Right ventricle myocardium inferior (tissue), 1 donor: ENCODE measurements at regions of chr2 and their contacts with region 1.

Region 1: DNA sequence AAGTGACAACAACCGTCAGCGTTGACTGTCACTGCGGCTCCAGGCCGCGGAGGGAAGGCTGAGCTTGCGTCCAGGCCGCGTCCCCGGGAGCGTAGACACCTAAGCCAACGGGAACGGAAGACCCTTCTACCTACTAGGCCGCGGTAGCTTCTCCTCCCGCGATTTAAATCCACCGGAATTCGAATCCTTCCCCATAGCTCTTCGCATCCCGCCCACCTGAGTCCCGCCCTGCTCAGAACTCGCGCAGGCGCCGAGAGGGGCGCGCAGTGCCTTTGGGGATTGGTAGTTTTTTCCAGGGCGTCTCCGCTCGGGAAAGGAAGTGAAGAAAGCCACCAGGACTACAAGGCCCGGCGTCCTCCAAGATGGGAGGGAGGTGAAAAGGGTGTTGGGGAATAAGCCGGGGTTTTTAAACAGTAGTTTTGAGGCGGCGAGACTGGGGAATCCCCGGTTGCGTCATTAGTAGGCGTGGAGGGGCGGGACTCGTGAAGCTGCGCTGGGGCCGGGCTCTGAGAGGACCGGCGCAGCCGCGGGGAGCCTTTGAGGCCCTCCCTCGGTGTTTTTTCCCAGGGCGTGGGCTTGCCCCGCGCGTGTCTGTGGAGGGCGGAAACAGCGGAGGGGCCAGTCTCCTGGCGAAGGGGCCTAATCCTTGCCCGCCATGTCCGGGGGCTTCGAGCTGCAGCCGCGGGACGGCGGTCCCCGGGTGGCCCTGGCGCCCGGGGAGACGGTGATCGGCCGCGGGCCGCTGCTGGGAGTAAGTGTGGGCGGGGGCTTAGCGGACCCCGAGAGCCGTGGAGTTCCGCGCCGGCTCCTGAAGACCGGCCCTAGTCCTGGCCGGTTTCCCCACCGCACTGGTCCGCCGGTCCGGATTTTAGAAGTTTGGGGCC is at the starts of genes APLF and FBXO48:
- DNase-seq: peak; percentile 98
- ATAC-seq: peak; percentile 99
- total RNA-seq, gene APLF: 3.8 TPM
- total RNA-seq, gene FBXO48: 1.1 TPM

Region 2: DNA sequence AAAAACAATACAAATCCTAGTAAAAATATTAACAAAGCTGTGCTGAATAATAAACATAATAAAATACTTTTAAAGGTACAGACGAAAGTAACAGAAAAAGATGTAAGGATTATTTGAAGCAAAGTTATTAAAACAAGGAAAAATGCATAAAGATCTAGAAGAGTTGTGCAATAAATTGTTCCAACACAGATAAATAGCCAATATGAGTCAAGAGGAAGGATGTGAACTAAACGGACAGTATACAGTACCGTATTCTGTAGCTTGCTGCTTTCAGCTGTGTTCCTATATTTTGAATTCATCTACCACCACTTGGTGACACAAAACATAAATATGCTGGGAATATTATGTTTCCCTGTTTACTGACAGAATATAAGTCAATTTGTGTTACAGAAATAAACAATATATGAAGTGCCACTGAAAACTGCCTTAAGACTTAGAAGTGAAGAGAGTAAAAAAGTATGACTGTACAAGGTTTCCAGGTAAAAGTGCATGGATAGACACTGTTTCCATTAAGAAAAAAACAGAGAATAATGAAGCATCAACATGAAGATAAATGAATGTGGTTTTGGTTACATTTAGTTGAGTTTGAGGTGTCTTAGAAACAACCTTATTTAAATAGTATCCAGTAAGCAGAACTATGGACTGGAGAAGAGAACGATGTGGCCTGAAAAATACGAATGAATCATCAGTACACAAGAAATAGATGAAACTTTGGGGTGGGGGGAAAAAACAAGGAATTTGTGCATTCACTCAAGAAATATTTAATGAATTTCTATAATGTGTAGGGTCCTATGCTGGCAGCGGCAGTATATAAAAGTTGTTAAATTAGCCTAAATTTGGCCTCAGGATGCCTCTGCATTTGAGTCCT is 228.1 kb before region 1 on chr2:
- intact Hi-C with region 1: no loop called
- DNase-seq: no peak
- ATAC-seq: no peak

Region 3: GRCh38 chr2:68516051-68516955 is 49.0 kb after region 1 on chr2:
- intact Hi-C with region 1: no loop called
- DNase-seq: no peak
- ATAC-seq: no peak

Region 4: DNA sequence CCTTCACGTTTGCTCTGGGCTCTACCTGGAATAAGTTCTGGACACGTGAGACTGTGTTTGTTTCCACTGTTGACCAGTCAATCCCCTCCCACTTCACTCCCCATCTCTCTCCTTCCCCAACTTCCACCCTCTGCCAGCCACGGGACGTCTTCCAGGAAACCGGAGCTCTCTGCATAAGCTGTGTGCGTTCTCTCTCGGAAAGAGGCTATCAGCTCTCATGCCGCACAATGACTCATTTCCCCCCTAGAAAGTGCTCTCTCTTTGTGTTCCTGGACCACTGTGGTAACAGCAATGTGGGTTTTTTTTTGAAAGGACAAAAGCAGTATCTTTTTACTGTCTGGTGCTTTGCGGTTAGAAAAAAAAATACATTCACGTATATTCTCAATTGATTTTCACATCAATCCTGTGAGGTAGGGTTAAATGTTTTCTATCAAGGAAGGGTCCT is 186.2 kb after region 1 on chr2:
- intact Hi-C with region 1: no loop called
- DNase-seq: no peak
- ATAC-seq: no peak

Region 5: DNA sequence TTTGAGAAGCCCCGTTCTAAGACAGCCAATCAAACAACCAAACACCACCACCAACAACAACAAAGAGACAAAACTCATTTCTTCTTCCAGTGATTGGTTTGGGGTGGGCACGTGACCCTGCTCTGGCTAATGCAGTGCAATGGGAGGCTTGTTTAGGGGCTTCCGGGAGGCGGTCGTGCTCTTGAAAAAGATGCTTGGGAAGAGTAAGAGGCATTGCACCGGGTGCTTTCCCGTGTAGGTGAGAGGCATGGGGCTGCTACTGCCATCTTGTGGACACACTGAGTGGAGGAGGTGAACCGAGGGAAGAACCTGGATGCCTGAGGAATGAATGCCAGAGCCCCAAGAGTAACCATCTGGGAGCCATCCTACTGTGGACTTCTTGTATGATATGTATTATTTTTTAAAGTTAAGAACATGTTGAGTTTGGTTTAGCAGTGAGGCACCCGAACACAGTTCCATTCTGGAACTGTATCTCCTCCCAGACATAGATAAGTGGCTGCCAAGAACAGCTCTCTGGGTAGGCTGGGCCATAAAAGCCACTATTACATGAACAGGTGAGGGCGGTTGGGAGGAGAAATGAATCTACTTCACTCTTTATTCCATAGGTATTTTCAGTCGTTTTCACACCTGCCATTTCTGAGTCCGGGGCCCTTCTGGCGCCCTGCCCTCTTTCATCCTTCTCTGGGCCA is 248.2 kb after region 1 on chr2:
- intact Hi-C with region 1: loop called (anchors 5 kb)
- DNase-seq: peak; percentile 62
- ATAC-seq: peak; percentile 57

Region 6: GRCh38 chr2:68925295-68925896 is 458.1 kb after region 1 on chr2:
- intact Hi-C with region 1: loop called (anchors 2 kb)
- DNase-seq: no peak
- ATAC-seq: peak; percentile 62